Panc1 (cell line): ENCODE measurements at regions of chr6 and their contacts with region 1.

Region 1: GRCh38 chr6:46410334-46410953 is 80.8 kb downstream of the RCAN2 start:
- DNase-seq: peak; percentile 12
- ATAC-seq: no peak
- H3K4me3 ChIP-seq: no peak overlapping the region
- H3K27ac ChIP-seq: no peak overlapping the region
- H3K4me1 ChIP-seq: no peaks in the 10 kb centered on the region
- H3K27me3 ChIP-seq: peaks cover 2% of the 10 kb centered on the region; the same call in 1 of the 2 replicates
- CTCF ChIP-seq: peak; percentile 73; the same call in 1 of the 2 replicates

Region 2: GRCh38 chr6:45930420-45931040 is 479.9 kb before region 1 on chr6:
- CTCF ChIA-PET with region 1: interaction called, 6 read pairs
- POLR2A ChIA-PET with region 1: no interaction called
- in situ Hi-C with region 1: no loop called
- intact Hi-C with region 1: loop called (anchors 2 kb)
- DNase-seq: peak; percentile 33
- ATAC-seq: peak; percentile 90
- H3K4me3 ChIP-seq: no peak overlapping the region
- H3K27ac ChIP-seq: no peak overlapping the region
- H3K4me1 ChIP-seq: no peaks in the 10 kb centered on the region
- H3K27me3 ChIP-seq: peaks cover 13% of the 10 kb centered on the region
- CTCF ChIP-seq: peak; percentile 97

Region 3: GRCh38 chr6:46090115-46091079 is 320.0 kb before region 1 on chr6:
- CTCF ChIA-PET with region 1: interaction called, 9 read pairs
- POLR2A ChIA-PET with region 1: no interaction called
- in situ Hi-C with region 1: no loop called
- intact Hi-C with region 1: loop called (anchors 1 kb)
- DNase-seq: peak; percentile 22
- ATAC-seq: no peak; the same call in 1 of the 2 replicates
- H3K4me3 ChIP-seq: no peak overlapping the region
- H3K27ac ChIP-seq: no peak overlapping the region
- H3K4me1 ChIP-seq: no peaks in the 10 kb centered on the region
- H3K27me3 ChIP-seq: no peaks in the 10 kb centered on the region; the same call in 1 of the 2 replicates
- CTCF ChIP-seq: peak; percentile 84

Region 4: DNA sequence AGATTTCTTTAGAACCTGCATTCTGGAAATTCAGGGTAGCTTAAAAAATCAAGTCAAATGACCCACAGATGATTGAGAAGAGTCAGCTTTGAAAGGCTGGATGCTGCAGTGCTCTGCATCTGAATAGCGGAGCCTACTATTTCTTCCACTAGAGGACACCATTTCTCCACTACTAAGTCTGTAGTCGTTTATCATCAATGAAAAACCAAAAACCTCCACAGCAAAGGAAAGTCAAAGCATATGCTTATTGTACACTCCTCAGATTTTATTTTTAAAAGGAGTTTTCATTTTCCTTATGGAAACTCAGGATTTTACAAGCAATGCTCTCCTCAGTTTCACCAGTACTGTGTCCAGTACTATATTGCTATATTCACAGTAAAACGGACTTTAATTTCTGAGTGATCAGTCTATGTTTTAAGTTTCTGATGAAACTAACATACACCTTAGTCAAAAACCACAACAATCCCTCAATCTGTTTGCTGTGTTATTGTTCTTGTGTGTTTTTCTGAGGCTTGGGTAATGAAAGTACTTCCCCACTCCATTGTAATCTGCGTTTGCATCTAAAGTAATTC is 189.1 kb before region 1 on chr6:
- CTCF ChIA-PET with region 1: no interaction called
- POLR2A ChIA-PET with region 1: no interaction called
- in situ Hi-C with region 1: no loop called
- intact Hi-C with region 1: loop called (anchors 1 kb)
- DNase-seq: peak; percentile 33
- ATAC-seq: peak; percentile 80; the same call in 1 of the 2 replicates
- H3K4me3 ChIP-seq: no peak overlapping the region
- H3K27ac ChIP-seq: no peak overlapping the region
- H3K4me1 ChIP-seq: no peaks in the 10 kb centered on the region
- H3K27me3 ChIP-seq: 0 out of 2 replicates have a peak, but pooled peaks cover 2% of the 10 kb centered on the region
- CTCF ChIP-seq: peak; percentile 75; the same call in 1 of the 2 replicates

Region 5: GRCh38 chr6:46427482-46427881 is 17.0 kb after region 1 on chr6:
- CTCF ChIA-PET with region 1: no interaction called
- POLR2A ChIA-PET with region 1: no interaction called
- in situ Hi-C with region 1: no loop called
- intact Hi-C with region 1: no loop called
- DNase-seq: no peak
- ATAC-seq: no peak
- H3K4me3 ChIP-seq: no peak overlapping the region
- H3K27ac ChIP-seq: no peak overlapping the region
- H3K4me1 ChIP-seq: no peaks in the 10 kb centered on the region
- H3K27me3 ChIP-seq: peaks cover 2% of the 10 kb centered on the region; the same call in 1 of the 2 replicates
- CTCF ChIP-seq: no peak

Region 6: GRCh38 chr6:46501136-46502089 is 91.0 kb after region 1 on chr6:
- CTCF ChIA-PET with region 1: interaction called, 14 read pairs
- POLR2A ChIA-PET with region 1: no interaction called
- in situ Hi-C with region 1: no loop called
- intact Hi-C with region 1: no loop called
- DNase-seq: no peak
- ATAC-seq: no peak
- H3K4me3 ChIP-seq: no peak overlapping the region
- H3K27ac ChIP-seq: no peak overlapping the region
- H3K4me1 ChIP-seq: no peaks in the 10 kb centered on the region
- H3K27me3 ChIP-seq: no peaks in the 10 kb centered on the region; the same call in 1 of the 2 replicates
- CTCF ChIP-seq: no peak